GM12878 (cell line): ENCODE measurements at regions of chr13 and their contacts with region 1.

Region 1: DNA sequence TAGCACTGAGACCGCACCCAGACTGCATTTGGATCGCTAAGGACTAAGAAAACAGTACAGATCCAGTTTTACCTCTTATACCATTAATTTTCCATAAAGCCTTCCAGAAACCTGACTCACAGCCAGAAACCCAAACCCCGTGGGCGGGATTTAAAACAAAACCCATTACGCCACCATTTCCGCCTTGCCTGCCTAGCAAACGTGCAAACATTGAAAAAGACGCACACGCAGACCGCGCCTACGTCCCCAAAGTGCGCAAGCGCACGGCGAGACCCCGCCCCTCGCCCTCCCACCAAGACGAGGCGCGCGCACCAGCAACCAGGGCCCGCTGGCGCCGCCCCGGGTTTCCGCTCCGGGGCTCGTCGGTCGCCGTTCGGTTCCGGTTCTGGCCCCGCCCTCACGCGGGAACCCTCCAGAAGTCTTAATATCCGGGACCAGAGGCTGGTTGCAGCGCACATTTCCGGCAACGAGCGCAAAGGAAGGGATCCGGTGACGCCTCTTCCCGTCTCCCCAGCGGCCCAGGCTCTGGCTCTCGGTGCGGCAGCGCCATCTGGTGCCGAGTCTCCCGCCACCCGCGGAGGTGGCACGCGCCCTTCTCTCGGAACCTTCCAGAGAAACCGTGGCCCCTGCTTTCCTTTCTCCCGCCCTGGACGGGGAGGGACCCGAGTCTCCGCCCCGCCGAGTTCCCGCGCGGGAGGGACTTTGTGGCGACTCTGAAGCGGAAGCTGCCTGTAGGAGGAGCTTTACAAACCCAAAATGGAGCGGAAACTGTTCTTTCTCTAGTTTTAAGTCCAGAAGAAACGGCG is 256.9 kb upstream of the STARD13 start:
- DNase-seq: peak; percentile 94
- ATAC-seq: peak; percentile 90
- H3K4me3 ChIP-seq: peak overlapping the region; percentile 69
- H3K27ac ChIP-seq: peak overlapping the region; percentile 97
- H3K4me1 ChIP-seq: peaks cover 12% of the 10 kb centered on the region
- H3K27me3 ChIP-seq: no peaks in the 10 kb centered on the region
- CTCF ChIP-seq: peak; percentile 86 to 99 (median 88)
- EP300 ChIP-seq: no peak; a peak in 1 of 4 replicates
- POLR2A ChIP-seq: peak; percentile 70
- RAD21 ChIP-seq: peak; percentile 90

Region 2: DNA sequence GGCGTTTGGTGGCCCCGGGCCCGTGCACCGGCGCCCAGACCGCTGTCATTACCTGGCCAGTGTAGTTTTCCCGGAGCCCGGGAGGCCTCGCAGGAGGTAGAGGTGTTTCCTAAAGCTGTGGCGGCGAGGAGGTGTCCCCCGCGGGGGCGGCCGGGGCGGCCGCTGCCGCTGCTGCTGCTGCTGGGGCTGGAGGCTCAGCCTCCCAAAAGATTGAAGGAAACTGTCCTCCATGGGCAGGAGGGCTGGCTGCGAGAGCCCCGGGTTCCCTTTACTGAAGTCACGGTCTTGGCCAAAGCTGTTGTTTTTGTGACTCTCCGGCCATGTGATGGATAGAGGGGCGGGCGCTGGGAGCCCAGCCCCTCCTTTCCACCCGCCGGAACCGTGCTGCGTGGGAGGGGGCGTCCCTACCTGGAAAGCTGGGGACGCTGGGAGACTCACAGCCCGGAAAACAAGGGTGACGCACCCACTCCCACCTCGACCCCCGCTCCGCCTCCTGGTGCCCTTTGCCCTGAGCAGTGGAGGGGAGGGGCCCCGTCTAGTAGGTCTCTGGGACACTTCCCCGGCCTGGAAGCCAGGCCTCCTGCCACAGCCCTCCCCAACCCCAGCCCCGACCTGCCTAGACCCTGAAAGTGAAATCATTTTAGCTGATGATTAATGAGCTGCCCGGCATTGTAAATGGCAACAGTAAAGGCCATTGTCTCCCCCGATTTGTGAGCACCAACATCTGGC is 1114.5 kb before region 1 on chr13 and contains the start of gene N4BP2L1:
- CTCF ChIA-PET with region 1: no interaction called
- POLR2A ChIA-PET with region 1: no interaction called
- RAD21 ChIA-PET with region 1: interaction called, 3 read pairs
- SMC1A ChIA-PET with region 1: no interaction called
- in situ Hi-C with region 1: loop called (anchors 25 kb)
- intact Hi-C with region 1: no loop called
- DNase-seq: peak; percentile 87
- ATAC-seq: peak; percentile 85
- H3K4me3 ChIP-seq: peak within 1 kb of the TSS; percentile 94
- H3K27ac ChIP-seq: peak within 1 kb of the TSS; percentile 98
- H3K4me1 ChIP-seq: peaks cover 17% of the 10 kb centered on the region
- H3K27me3 ChIP-seq: no peaks in the 10 kb centered on the region
- CTCF ChIP-seq: no peak
- EP300 ChIP-seq: peak in 1 of 2 experiments; percentile 36; a peak in 1 of 4 replicates
- POLR2A ChIP-seq: peak; percentile 91
- RAD21 ChIP-seq: no peak
- polyA plus RNA-seq, gene N4BP2L1: 3.3 to 5.7 TPM

Region 3: GRCh38 chr13:32737111-32737571 is 805.3 kb before region 1 on chr13:
- CTCF ChIA-PET with region 1: no interaction called
- POLR2A ChIA-PET with region 1: no interaction called
- RAD21 ChIA-PET with region 1: interaction called, 7 read pairs
- SMC1A ChIA-PET with region 1: interaction called, 3 read pairs
- in situ Hi-C with region 1: no loop called
- intact Hi-C with region 1: loop called (anchors 1 kb)
- DNase-seq: peak; percentile 63
- ATAC-seq: peak; percentile 84
- H3K4me3 ChIP-seq: peak overlapping the region; percentile 51
- H3K27ac ChIP-seq: peak overlapping the region; percentile 90
- H3K4me1 ChIP-seq: no peaks in the 10 kb centered on the region
- H3K27me3 ChIP-seq: no peaks in the 10 kb centered on the region
- CTCF ChIP-seq: no peak
- EP300 ChIP-seq: no peak
- POLR2A ChIP-seq: no peak
- RAD21 ChIP-seq: no peak

Region 4: GRCh38 chr13:33146843-33147611 is 395.5 kb before region 1 on chr13:
- CTCF ChIA-PET with region 1: interaction called, 3 read pairs
- POLR2A ChIA-PET with region 1: no interaction called
- RAD21 ChIA-PET with region 1: interaction called, 5 read pairs
- SMC1A ChIA-PET with region 1: interaction called, 3 read pairs
- in situ Hi-C with region 1: no loop called
- intact Hi-C with region 1: loop called (anchors 2 kb)
- DNase-seq: peak; percentile 98
- ATAC-seq: peak; percentile 63
- H3K4me3 ChIP-seq: no peak overlapping the region
- H3K27ac ChIP-seq: peak overlapping the region; percentile 98
- H3K4me1 ChIP-seq: peaks cover 59% of the 10 kb centered on the region
- H3K27me3 ChIP-seq: no peaks in the 10 kb centered on the region
- CTCF ChIP-seq: no peak
- EP300 ChIP-seq: peak; percentile 99
- POLR2A ChIP-seq: no peak
- RAD21 ChIP-seq: peak; percentile 37; the same call in 1 of the 2 replicates

Region 5: GRCh38 chr13:33228648-33229445 is 313.6 kb before region 1 on chr13:
- CTCF ChIA-PET with region 1: interaction called, 12 read pairs
- POLR2A ChIA-PET with region 1: interaction called, 4 read pairs
- RAD21 ChIA-PET with region 1: interaction called, 16 read pairs
- SMC1A ChIA-PET with region 1: interaction called, 21 read pairs
- in situ Hi-C with region 1: no loop called
- intact Hi-C with region 1: loop called (anchors 1 kb)
- DNase-seq: no peak
- ATAC-seq: peak; percentile 94
- H3K4me3 ChIP-seq: no peak overlapping the region
- H3K27ac ChIP-seq: no peak overlapping the region
- H3K4me1 ChIP-seq: no peaks in the 10 kb centered on the region
- H3K27me3 ChIP-seq: no peaks in the 10 kb centered on the region
- CTCF ChIP-seq: peak; percentile 83 to 98 (median 94)
- EP300 ChIP-seq: no peak
- POLR2A ChIP-seq: no peak
- RAD21 ChIP-seq: peak; percentile 98

Region 6: GRCh38 chr13:33665626-33666175 is 123.2 kb after region 1 on chr13:
- CTCF ChIA-PET with region 1: no interaction called
- POLR2A ChIA-PET with region 1: no interaction called
- RAD21 ChIA-PET with region 1: no interaction called
- SMC1A ChIA-PET with region 1: no interaction called
- in situ Hi-C with region 1: no loop called
- intact Hi-C with region 1: no loop called
- DNase-seq: no peak
- ATAC-seq: no peak
- H3K4me3 ChIP-seq: no peak overlapping the region
- H3K27ac ChIP-seq: no peak overlapping the region
- H3K4me1 ChIP-seq: no peaks in the 10 kb centered on the region
- H3K27me3 ChIP-seq: no peaks in the 10 kb centered on the region
- CTCF ChIP-seq: no peak
- EP300 ChIP-seq: no peak
- POLR2A ChIP-seq: no peak
- RAD21 ChIP-seq: no peak

Region 7: DNA sequence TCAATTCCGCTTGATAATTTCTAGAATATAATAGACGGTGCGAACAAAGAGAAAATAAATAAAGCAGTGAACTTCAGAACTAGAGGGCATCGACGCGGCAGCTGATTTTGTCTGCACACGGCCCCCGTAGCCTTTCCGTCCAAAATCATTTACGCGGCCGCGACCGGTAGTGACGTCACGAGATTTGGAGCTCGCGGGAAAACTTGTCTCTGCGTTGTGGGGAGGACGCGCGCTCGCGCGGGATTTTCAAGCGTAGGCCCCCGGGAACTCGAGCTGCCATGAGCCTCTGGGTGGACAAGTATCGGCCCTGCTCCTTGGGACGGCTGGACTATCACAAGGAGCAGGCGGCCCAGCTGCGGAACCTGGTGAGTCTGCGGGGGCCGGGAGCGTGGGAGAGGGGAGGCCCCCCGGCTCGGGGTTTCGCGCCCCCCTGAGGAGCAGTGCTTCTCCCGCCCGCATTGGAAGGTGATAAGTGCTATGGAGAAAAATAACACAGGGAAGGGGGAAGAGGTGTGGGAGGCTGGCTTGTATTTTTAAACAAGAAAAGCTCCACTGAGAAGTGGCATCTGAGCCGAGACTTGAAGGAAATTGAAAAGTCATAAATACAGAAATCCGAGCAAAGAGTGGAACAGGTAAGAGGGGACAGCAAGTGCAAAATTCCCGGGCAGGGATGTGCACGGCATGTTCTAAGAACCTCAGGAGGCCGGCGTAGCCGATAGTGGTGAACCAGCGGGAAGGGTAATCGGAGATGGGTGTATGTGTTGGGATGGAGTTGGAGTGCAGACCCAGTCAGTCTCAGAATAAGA is 275.6 kb after region 1 on chr13 and contains the start of gene RFC3:
- CTCF ChIA-PET with region 1: interaction called, 3 read pairs
- POLR2A ChIA-PET with region 1: interaction called, 3 read pairs
- RAD21 ChIA-PET with region 1: interaction called, 4 read pairs
- SMC1A ChIA-PET with region 1: interaction called, 3 read pairs
- in situ Hi-C with region 1: no loop called
- intact Hi-C with region 1: loop called (anchors 5 kb)
- DNase-seq: peak; percentile 69
- ATAC-seq: peak; percentile 95
- H3K4me3 ChIP-seq: peak within 1 kb of the TSS; percentile 96
- H3K27ac ChIP-seq: peak within 1 kb of the TSS; percentile 77
- H3K4me1 ChIP-seq: no peaks in the 10 kb centered on the region
- H3K27me3 ChIP-seq: no peaks in the 10 kb centered on the region
- CTCF ChIP-seq: no peak
- EP300 ChIP-seq: 0 out of 4 replicates have a peak, but pooled peaks of 1 of the 2 experiments have one; percentile 64
- POLR2A ChIP-seq: peak; percentile 89
- RAD21 ChIP-seq: 0 out of 2 replicates have a peak, but pooled peaks have one; percentile 3
- polyA plus RNA-seq, gene RFC3: 88.9 to 95.9 TPM